Right lobe of liver (tissue), 6 donors: ENCODE measurements at regions of chr2 and their contacts with region 1.

Region 1: GRCh38 chr2:224357098-224357901 is 44.6 kb downstream of the FAM124B start:
- DNase-seq: peak in 1 of 3 donors; percentile 66
- ATAC-seq: peak; percentile 93 to 97 (median 95)
- H3K4me3 ChIP-seq: peak overlapping the region in 2 of 3 donors; percentile 36 to 53
- H3K27ac ChIP-seq: peak overlapping the region in 2 of 3 donors; percentile 29 to 34
- H3K4me1 ChIP-seq: no peaks in the 10 kb centered on the region
- H3K27me3 ChIP-seq: no peaks in the 10 kb centered on the region
- CTCF ChIP-seq: peak; percentile 75 to 96 (median 79)
- POLR2A ChIP-seq: no peak

Region 2: GRCh38 chr2:224195925-224196571 is 161.3 kb before region 1 on chr2:
- intact Hi-C with region 1: no loop called
- DNase-seq: no peak
- ATAC-seq: no peak
- H3K4me3 ChIP-seq: no peak overlapping the region
- H3K27ac ChIP-seq: no peak overlapping the region
- H3K4me1 ChIP-seq: no peaks in the 10 kb centered on the region
- H3K27me3 ChIP-seq: no peaks in the 10 kb centered on the region
- CTCF ChIP-seq: no peak
- POLR2A ChIP-seq: no peak

Region 3: GRCh38 chr2:224252631-224253030 is 104.7 kb before region 1 on chr2:
- intact Hi-C with region 1: no loop called
- DNase-seq: no peak
- ATAC-seq: no peak
- H3K4me3 ChIP-seq: no peak overlapping the region
- H3K27ac ChIP-seq: no peak overlapping the region
- H3K4me1 ChIP-seq: no peaks in the 10 kb centered on the region
- H3K27me3 ChIP-seq: no peaks in the 10 kb centered on the region
- CTCF ChIP-seq: no peak
- POLR2A ChIP-seq: no peak

Region 4: DNA sequence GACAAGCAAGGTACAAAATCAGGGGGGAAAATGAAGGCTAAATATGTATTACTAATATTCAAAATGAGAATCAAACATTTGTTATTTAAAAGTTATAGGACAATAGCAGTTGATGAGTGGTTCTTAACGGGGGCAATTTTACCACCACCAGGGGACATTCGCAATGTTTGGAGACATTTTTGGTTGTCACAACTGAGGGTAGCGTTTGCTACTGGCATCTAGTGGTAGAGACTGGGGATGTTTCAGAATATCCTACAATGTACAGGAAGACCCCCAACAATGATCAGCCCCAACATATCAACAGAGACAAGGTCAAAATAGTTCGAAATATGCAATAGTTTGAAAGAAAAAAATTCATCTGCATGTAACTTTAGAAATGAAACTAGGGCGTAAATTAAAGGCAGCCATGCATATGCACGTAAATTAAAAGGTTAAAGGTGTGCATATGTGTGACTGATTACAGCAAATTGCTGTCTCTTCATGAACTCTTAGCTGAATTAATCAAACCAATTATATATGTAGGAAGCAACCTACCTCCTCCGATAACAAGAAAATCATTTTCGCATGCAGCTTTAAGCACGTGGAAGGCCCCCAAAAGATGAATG is 289.0 kb after region 1 on chr2:
- intact Hi-C with region 1: loop called (anchors 5 kb)
- DNase-seq: no peak
- ATAC-seq: peak; percentile 55 to 72 (median 68)
- H3K4me3 ChIP-seq: no peak overlapping the region
- H3K27ac ChIP-seq: no peak overlapping the region
- H3K4me1 ChIP-seq: no peaks in the 10 kb centered on the region
- H3K27me3 ChIP-seq: no peaks in the 10 kb centered on the region
- CTCF ChIP-seq: peak; percentile 62 to 68 (median 66)
- POLR2A ChIP-seq: no peak